ENCODE measurements at regions of chr6 and their contacts with region 1.

Region 1: DNA sequence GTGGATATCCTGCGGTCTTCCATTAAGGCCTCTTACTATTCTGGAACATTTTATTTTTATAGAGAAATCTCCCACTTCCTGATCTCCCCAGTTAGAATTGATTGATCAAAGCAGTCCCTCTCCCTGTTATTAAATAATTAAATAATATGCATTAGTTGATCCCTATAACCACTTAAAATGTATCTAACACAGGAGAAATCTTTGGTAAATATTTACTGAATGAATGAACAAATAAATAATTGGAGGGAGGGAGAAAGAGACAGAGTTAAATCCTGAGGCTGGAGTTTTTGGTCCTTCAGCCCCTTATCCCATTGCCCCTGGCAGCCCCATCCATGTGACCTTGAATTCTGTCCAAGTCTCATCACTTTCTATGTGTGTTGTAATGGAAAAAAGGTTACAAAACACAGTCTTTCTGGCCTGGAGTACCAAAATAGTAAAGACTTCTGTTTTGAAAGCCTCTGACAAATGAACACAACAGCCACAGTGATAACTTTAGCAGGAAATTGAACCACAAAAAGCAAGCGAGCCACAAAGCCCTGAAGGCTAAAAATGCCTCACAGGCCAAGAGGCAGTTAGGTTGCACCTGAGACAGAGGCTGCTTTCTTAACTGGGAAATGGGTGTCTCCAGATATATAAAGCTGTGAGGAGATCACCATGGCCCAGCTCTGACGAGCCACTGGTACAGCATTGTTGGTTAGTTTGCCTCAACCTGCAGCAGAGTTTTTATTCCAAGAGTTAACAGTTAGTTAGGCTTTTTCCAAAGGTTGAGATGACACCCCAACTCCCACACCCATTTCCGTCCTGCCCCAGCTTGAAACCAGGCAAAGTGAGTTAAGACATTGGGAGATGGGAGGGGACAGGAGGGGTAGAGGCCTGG is 11.3 kb downstream of the NT5E start:
- DNase-seq: peak; percentile 66
- ATAC-seq: peak; percentile 31
- H3K4me3 Mint-ChIP-seq: peak overlapping the region; percentile 21
- H3K27ac Mint-ChIP-seq: peak overlapping the region; percentile 88
- H3K4me1 Mint-ChIP-seq: peaks cover 89% of the 10 kb centered on the region
- H3K27me3 Mint-ChIP-seq: peaks cover 5% of the 10 kb centered on the region

Region 2: GRCh38 chr6:85323435-85324040 is 137.6 kb before region 1 on chr6:
- CTCF ChIA-PET with region 1: no interaction called
- POLR2A ChIA-PET with region 1: no interaction called
- intact Hi-C with region 1: no loop called
- DNase-seq: peak; percentile 88
- ATAC-seq: peak; percentile 53
- H3K4me3 Mint-ChIP-seq: no peak overlapping the region
- H3K27ac Mint-ChIP-seq: no peak overlapping the region
- H3K4me1 Mint-ChIP-seq: no peaks in the 10 kb centered on the region
- H3K27me3 Mint-ChIP-seq: peaks cover 8% of the 10 kb centered on the region

Region 3: GRCh38 chr6:85431271-85431670 is 29.9 kb before region 1 on chr6:
- CTCF ChIA-PET with region 1: no interaction called
- POLR2A ChIA-PET with region 1: interaction called, 13 read pairs
- intact Hi-C with region 1: no loop called
- DNase-seq: no peak
- ATAC-seq: no peak
- H3K4me3 Mint-ChIP-seq: no peak overlapping the region
- H3K27ac Mint-ChIP-seq: no peak overlapping the region
- H3K4me1 Mint-ChIP-seq: no peaks in the 10 kb centered on the region
- H3K27me3 Mint-ChIP-seq: peaks cover 2% of the 10 kb centered on the region

Region 4: DNA sequence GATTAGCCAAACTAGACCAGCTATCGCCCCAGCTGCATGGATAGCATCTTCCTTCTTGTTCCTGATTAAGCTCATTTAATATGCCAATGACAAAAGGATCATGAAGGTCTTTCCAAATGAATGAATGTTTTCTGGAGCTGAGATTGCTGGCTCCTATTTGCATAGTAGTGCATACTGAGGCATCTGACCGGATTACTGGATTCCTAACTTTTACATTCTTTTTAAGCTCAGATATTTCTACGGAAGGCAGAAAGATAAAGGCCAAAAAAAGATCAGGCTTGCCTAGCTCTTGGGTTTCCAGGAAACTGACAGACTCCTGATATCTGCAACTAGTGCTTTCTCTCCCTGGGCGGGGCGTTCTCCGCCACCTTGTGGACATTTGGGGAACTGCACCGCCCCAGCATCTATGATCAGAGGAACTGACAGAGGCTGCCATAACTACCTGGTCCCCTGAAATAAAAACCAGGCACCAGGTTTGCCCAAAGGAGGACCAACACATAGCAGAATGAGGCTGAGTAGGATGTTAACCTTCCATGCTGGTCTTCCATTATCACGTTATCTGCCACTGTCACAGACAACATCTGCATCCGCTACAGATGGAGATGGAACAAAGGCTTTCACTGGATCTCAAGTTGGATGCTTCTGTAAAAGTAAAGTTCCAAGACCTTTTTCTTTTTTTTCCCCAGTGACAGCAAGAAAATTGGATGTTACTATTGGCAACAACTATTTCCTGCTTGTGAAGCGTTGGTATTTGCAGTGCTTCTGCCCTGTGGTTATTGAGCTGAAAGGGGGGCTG is 21.9 kb after region 1 on chr6:
- CTCF ChIA-PET with region 1: interaction called, 17 read pairs
- POLR2A ChIA-PET with region 1: no interaction called
- intact Hi-C with region 1: loop called in 1 of 2 experiments (anchors 1 kb)
- DNase-seq: peak; percentile 91
- ATAC-seq: peak; percentile 96
- H3K4me3 Mint-ChIP-seq: no peak overlapping the region
- H3K27ac Mint-ChIP-seq: peak overlapping the region; percentile 23
- H3K4me1 Mint-ChIP-seq: peaks cover 9% of the 10 kb centered on the region
- H3K27me3 Mint-ChIP-seq: no peaks in the 10 kb centered on the region

Region 5: GRCh38 chr6:85593438-85594196 is 132.5 kb after region 1 on chr6 and contains the start of gene SNX14:
- CTCF ChIA-PET with region 1: no interaction called
- POLR2A ChIA-PET with region 1: no interaction called
- intact Hi-C with region 1: loop called (anchors 2 to 5 kb)
- DNase-seq: peak; percentile 87
- ATAC-seq: peak; percentile 81
- H3K4me3 Mint-ChIP-seq: peak within 1 kb of the TSS; percentile 83
- H3K27ac Mint-ChIP-seq: peak within 1 kb of the TSS; percentile 90
- H3K4me1 Mint-ChIP-seq: peaks cover 28% of the 10 kb centered on the region
- H3K27me3 Mint-ChIP-seq: no peaks in the 10 kb centered on the region
- total RNA-seq, gene SNX14: 38.4 to 54.7 TPM

Region 6: GRCh38 chr6:85669735-85670194 is 208.6 kb after region 1 on chr6:
- CTCF ChIA-PET with region 1: no interaction called
- POLR2A ChIA-PET with region 1: no interaction called
- intact Hi-C with region 1: loop called (anchors 2 to 5 kb)
- DNase-seq: peak; percentile 62
- ATAC-seq: peak; percentile 94
- H3K4me3 Mint-ChIP-seq: peak overlapping the region; percentile 68
- H3K27ac Mint-ChIP-seq: peak overlapping the region; percentile 87
- H3K4me1 Mint-ChIP-seq: peaks cover 56% of the 10 kb centered on the region
- H3K27me3 Mint-ChIP-seq: no peaks in the 10 kb centered on the region

Measured in activated CD4-positive, alpha-beta T cell treated with anti-CD3 and anti-CD28 coated beads for 36 hours (primary cell).